ENCODE measurements at regions of chr10 and their contacts with region 1.

Region 1: DNA sequence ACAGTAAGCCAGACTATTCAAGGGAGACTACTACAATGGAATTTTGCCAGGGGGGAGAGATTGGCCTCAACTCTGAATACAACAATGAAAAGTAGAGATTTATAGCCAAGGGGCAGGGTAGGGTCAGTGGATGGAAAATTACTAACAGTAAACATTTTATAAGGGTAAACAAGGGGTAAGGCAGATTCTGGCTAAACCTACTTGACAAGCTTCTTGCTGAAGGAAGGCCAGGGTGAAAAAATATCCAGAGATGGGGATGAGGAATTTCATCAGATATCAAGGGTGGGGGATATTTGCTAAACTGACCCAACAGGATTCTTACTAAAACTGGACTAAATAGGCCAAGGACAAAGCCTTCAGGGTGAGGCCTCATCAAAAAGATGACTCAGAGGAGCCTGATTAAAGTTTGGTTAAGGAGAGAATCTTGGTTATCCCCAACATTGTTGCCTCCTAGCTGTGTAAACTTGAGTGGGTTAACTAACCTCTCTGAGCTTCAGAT is 156.3 kb downstream of the RTKN2 start:
- DNase-seq: peak; percentile 100
- ATAC-seq: peak; percentile 83
- H3K4me3 ChIP-seq: no peak overlapping the region
- H3K27ac ChIP-seq: peak overlapping the region; percentile 62
- H3K4me1 ChIP-seq: peaks cover 74% of the 10 kb centered on the region
- H3K27me3 ChIP-seq: no peaks in the 10 kb centered on the region
- CTCF ChIP-seq: no peak

Region 2: GRCh38 chr10:62076891-62077290 is 35.4 kb before region 1 on chr10:
- CTCF ChIA-PET with region 1: interaction called, 4 read pairs
- POLR2A ChIA-PET with region 1: no interaction called
- intact Hi-C with region 1: loop called (anchors 1 kb)
- DNase-seq: peak; percentile 100
- ATAC-seq: peak; percentile 99
- H3K4me3 ChIP-seq: peak overlapping the region; percentile 31
- H3K27ac ChIP-seq: peak overlapping the region; percentile 61
- H3K4me1 ChIP-seq: peaks cover 45% of the 10 kb centered on the region
- H3K27me3 ChIP-seq: no peaks in the 10 kb centered on the region
- CTCF ChIP-seq: peak; percentile 95

Region 3: GRCh38 chr10:62095181-62096071 is 16.9 kb before region 1 on chr10:
- CTCF ChIA-PET with region 1: no interaction called
- POLR2A ChIA-PET with region 1: interaction called, 3 read pairs
- intact Hi-C with region 1: loop called (anchors 1 kb)
- DNase-seq: peak; percentile 97
- ATAC-seq: peak; percentile 50
- H3K4me3 ChIP-seq: peak overlapping the region; percentile 43
- H3K27ac ChIP-seq: peak overlapping the region; percentile 57
- H3K4me1 ChIP-seq: peaks cover 43% of the 10 kb centered on the region
- H3K27me3 ChIP-seq: no peaks in the 10 kb centered on the region
- CTCF ChIP-seq: no peak

Region 4: DNA sequence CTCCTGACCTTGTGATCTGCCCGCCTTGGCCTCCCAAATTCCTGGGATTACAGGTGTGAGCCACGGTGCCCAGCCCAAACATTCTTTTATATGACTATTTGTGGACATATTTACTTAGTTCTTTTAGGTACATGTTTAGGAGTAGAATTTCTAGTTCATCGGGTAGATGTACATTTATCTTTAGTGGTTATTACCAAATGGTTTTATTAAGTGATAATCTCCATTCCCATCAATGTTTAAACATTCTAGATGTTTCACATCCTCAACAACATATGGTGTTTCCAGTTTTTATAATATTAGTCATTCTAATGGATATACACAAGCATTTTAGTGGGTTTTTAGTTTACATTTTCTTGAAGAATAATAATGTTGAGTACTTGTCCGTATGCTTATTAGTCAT is 24.6 kb after region 1 on chr10:
- CTCF ChIA-PET with region 1: interaction called, 3 read pairs
- POLR2A ChIA-PET with region 1: no interaction called
- intact Hi-C with region 1: loop called (anchors 1 kb)
- DNase-seq: peak; percentile 100
- ATAC-seq: peak; percentile 85
- H3K4me3 ChIP-seq: no peak overlapping the region
- H3K27ac ChIP-seq: peak overlapping the region; percentile 76
- H3K4me1 ChIP-seq: peaks cover 25% of the 10 kb centered on the region
- H3K27me3 ChIP-seq: no peaks in the 10 kb centered on the region
- CTCF ChIP-seq: no peak

Region 5: DNA sequence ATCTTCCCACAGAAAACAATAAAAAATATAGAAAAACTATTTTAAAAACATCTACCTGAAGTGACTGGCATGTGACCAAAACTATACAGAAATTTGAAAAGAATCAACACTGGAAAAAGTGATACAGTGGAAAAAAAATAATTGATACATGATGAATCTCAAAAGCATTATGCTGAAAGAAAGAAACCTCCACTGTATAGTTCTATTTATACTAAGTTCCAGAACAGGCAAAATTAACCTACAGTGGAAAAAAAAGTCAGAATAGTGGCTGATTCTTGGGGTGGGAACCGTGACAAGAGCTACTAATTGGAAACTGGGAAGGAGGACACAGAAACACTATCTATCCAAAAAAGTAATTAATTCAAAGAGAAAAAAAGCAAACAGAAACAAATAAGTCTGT is 141.4 kb after region 1 on chr10:
- CTCF ChIA-PET with region 1: no interaction called
- POLR2A ChIA-PET with region 1: no interaction called
- intact Hi-C with region 1: no loop called
- DNase-seq: no peak
- ATAC-seq: no peak
- H3K4me3 ChIP-seq: no peak overlapping the region
- H3K27ac ChIP-seq: no peak overlapping the region
- H3K4me1 ChIP-seq: peaks cover 26% of the 10 kb centered on the region
- H3K27me3 ChIP-seq: no peaks in the 10 kb centered on the region
- CTCF ChIP-seq: no peak

Measured in PC-3 (cell line).